Naive thymus-derived CD4-positive, alpha-beta T cell (primary cell): ENCODE measurements at regions of chr7 and their contacts with region 1.

Region 1: GRCh38 chr7:117212969-117213877 is 109.6 kb downstream of the WNT2 start:
- DNase-seq: peak in 5 of 9 donors; percentile 15 to 32 (median 27)
- ATAC-seq: peak; percentile 83
- H3K4me3 ChIP-seq: no peak overlapping the region
- H3K4me3 Mint-ChIP-seq: no peak overlapping the region
- H3K27ac ChIP-seq: no peak overlapping the region
- H3K27ac Mint-ChIP-seq: no peak overlapping the region
- H3K4me1 ChIP-seq: no peaks in the 10 kb centered on the region
- H3K4me1 Mint-ChIP-seq: no peaks in the 10 kb centered on the region
- H3K27me3 ChIP-seq: no peaks in the 10 kb centered on the region
- H3K27me3 Mint-ChIP-seq: peaks cover 0 to 2% (median 0%) of the 10 kb centered on the region in 5 donors

Region 2: DNA sequence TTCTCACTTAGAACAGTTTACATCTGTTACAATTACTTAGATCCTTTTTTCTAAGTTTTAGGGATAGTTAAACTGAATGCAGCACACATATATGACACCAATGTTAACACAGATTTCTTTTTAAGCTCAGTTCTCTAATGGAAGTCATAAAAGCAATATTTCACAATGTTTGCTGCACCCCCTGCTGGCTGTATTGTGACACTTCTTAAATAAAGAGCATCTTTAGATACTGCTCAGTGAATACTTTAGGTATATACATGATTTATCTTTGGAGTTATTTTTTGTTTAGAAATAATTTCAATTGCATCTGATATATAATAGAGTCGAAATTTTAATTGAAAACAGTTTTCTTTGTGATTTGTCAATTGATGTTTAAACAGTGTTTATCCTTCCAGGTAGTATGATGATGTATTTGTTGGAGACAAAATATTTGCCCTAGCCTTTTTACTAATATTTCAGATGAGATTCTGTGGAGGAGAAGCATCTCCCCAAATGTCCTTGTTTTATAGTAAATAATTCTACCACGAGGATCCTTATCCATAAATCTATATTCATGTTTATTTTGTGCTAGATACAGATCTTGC is 85.5 kb before region 1 on chr7:
- CTCF ChIA-PET with region 1: no interaction called
- POLR2A ChIA-PET with region 1: no interaction called
- intact Hi-C with region 1: no loop called
- DNase-seq: peak in 8 of 9 donors; percentile 9 to 53 (median 44)
- ATAC-seq: peak; percentile 76
- H3K4me3 ChIP-seq: no peak overlapping the region
- H3K4me3 Mint-ChIP-seq: no peak overlapping the region
- H3K27ac ChIP-seq: no peak overlapping the region
- H3K27ac Mint-ChIP-seq: no peak overlapping the region
- H3K4me1 ChIP-seq: no peaks in the 10 kb centered on the region
- H3K4me1 Mint-ChIP-seq: no peaks in the 10 kb centered on the region
- H3K27me3 ChIP-seq: no peaks in the 10 kb centered on the region
- H3K27me3 Mint-ChIP-seq: peaks cover 0 to 11% (median 0%) of the 10 kb centered on the region in 5 donors

Region 3: DNA sequence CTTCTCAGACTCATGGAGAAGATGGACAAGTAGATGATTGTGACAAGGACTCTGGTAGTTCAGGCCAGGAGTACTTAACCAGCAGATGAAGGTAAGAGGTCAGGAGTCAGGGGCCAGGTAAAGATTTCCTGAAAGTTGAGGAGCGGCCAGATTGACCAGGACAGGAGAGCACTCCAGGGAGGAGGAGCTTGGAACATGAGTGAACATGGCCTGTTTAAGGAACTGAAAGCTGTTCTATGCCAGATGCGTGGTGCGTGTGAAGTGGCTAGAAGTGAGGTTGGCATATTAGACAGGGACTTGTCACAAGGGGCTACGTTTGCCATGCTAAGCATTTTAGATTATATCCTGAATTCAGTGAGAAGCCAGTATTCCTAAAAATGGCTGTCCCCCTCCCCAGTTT is 47.6 kb before region 1 on chr7:
- CTCF ChIA-PET with region 1: no interaction called
- POLR2A ChIA-PET with region 1: no interaction called
- intact Hi-C with region 1: no loop called
- DNase-seq: no peak
- ATAC-seq: no peak
- H3K4me3 ChIP-seq: no peak overlapping the region
- H3K4me3 Mint-ChIP-seq: no peak overlapping the region
- H3K27ac ChIP-seq: no peak overlapping the region
- H3K27ac Mint-ChIP-seq: no peak overlapping the region
- H3K4me1 ChIP-seq: no peaks in the 10 kb centered on the region
- H3K4me1 Mint-ChIP-seq: no peaks in the 10 kb centered on the region
- H3K27me3 ChIP-seq: no peaks in the 10 kb centered on the region
- H3K27me3 Mint-ChIP-seq: peaks cover 0 to 1% (median 0%) of the 10 kb centered on the region in 5 donors

Region 4: DNA sequence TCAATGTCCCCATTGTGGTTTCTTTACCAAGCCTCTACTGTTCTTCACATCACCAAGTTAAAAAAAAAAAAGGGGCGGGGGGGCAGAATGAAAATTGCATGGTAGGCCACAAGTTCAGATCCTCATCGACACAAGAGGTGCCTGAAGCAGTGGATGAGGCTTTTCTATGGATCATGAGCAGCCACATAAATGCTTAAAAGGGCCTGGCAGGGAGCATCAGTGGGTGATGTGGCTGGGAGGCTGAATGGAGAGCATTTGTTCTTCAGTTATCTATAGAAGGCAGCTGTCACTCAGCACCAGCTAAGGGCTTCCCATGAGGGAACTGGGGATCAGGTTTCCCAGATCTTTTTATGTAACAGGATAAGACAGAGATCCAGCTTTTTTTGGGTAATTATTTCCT is 384.5 kb after region 1 on chr7:
- CTCF ChIA-PET with region 1: no interaction called
- POLR2A ChIA-PET with region 1: no interaction called
- intact Hi-C with region 1: loop called in 1 of 2 experiments (anchors 5 kb)
- DNase-seq: no peak
- ATAC-seq: no peak
- H3K4me3 ChIP-seq: no peak overlapping the region
- H3K4me3 Mint-ChIP-seq: no peak overlapping the region
- H3K27ac ChIP-seq: no peak overlapping the region
- H3K27ac Mint-ChIP-seq: no peak overlapping the region
- H3K4me1 ChIP-seq: no peaks in the 10 kb centered on the region
- H3K4me1 Mint-ChIP-seq: no peaks in the 10 kb centered on the region
- H3K27me3 ChIP-seq: no peaks in the 10 kb centered on the region
- H3K27me3 Mint-ChIP-seq: no peaks in the 10 kb centered on the region